Activated CD4-positive, alpha-beta T cell treated with anti-CD3 and anti-CD28 coated beads for 36 hours (primary cell): ENCODE measurements at regions of chrX and their contacts with region 1.

Region 1: DNA sequence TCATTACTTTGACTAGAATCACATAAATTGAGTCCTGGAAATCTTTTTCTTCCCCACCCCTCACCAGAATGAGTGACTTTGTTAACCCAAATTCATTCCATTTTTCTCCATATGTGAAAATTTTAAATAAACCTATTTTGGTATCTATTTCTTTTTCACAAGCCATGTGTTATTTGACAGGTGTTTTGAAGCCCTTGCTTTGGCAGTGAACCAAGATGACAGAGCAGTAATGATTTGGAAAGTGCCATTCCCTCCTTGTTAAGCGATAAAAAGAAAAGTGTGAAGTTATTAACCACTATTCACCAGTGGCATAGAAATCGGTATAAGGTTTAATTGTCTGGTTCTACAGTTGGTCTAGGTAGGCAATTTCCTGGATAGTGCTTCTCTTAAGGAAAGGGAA is 66.1 kb downstream of the POLA1 start:
- DNase-seq: no peak
- ATAC-seq: no peak
- H3K4me3 Mint-ChIP-seq: no peak overlapping the region
- H3K27ac Mint-ChIP-seq: no peak overlapping the region
- H3K4me1 Mint-ChIP-seq: peaks cover 4% of the 10 kb centered on the region
- H3K27me3 Mint-ChIP-seq: no peaks in the 10 kb centered on the region

Region 2: DNA sequence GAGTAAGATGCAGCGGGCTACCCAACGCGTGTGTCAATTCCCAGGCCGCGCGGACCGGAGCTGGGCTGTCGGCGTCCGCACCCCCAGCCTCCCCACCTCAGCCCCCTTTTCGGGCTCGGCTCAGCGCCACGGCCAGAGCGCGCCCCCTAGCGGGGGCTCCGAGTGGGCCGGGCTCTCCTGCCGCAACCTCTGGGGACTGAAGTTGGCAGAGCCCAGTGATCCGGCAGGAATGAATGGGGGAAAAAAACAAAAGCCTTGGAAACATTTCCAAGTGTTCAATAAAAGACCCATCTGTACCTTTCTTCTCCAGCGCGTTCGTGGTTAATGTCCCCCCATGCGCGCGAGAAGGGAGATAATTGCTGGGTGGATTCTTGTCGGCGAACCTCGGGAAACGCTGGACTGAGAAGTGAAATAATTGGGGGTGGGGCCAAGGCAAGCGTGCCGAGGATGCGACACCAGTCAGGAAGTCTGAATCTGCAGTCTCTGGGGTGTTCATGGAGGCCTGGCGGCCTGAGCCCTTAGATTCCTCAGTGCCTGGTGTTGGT is 261.2 kb after region 1 on chrX:
- CTCF ChIA-PET with region 1: no interaction called
- POLR2A ChIA-PET with region 1: no interaction called
- intact Hi-C with region 1: loop called in 1 of 2 experiments (anchors 5 kb)
- DNase-seq: peak; percentile 60
- ATAC-seq: peak; percentile 60
- H3K4me3 Mint-ChIP-seq: no peak overlapping the region
- H3K27ac Mint-ChIP-seq: no peak overlapping the region
- H3K4me1 Mint-ChIP-seq: peaks cover 20% of the 10 kb centered on the region
- H3K27me3 Mint-ChIP-seq: peaks cover 50% of the 10 kb centered on the region

Region 3: DNA sequence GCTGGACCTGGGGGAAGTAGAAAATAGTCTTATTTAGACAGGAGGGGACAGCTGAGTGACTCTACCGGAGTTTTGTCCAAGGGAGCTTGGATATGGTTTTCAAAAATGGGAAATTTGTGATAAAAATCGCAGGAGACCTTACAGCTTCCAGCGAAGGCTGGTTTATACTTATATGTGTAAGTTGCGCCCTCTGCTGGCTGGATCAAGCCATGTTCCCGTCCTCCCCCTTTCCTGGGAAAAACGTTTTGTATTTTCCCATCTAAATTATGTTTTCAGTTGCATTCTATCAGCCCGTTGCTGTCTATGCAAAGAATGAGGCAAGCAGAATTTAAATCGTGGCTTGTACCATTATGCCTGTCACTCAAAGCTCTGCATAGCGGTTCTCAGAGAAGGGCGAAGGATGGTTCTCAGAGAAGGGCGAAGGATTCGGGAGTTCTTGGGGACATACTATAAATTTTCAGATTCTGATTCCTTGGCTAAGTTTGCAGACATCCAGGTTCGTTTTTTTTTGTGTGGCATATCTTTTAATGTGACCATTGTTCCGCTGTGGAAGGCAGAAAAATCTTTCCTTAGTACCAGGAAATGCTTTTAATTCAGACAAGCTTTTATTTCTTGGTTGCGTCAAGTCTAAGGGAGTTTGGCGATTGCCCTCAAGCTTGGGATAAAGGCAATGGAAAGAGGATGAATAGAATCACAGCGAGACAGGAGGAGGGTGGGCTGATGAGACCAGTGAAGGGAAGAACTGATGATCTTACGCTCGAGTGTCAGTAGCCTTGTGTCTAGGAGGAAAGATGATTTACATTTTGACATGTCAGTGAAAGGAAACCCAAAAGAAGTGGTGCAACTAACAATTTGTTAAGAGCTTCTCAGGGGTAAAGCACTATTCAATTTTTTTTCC is 384.5 kb after region 1 on chrX:
- CTCF ChIA-PET with region 1: no interaction called
- POLR2A ChIA-PET with region 1: no interaction called
- intact Hi-C with region 1: loop called in 1 of 2 experiments (anchors 5 kb)
- DNase-seq: peak; percentile 55
- ATAC-seq: no peak
- H3K4me3 Mint-ChIP-seq: no peak overlapping the region
- H3K27ac Mint-ChIP-seq: no peak overlapping the region
- H3K4me1 Mint-ChIP-seq: peaks cover 2% of the 10 kb centered on the region
- H3K27me3 Mint-ChIP-seq: peaks cover 3% of the 10 kb centered on the region